ENCODE measurements at regions of chr12 and their contacts with region 1.

Region 1: DNA sequence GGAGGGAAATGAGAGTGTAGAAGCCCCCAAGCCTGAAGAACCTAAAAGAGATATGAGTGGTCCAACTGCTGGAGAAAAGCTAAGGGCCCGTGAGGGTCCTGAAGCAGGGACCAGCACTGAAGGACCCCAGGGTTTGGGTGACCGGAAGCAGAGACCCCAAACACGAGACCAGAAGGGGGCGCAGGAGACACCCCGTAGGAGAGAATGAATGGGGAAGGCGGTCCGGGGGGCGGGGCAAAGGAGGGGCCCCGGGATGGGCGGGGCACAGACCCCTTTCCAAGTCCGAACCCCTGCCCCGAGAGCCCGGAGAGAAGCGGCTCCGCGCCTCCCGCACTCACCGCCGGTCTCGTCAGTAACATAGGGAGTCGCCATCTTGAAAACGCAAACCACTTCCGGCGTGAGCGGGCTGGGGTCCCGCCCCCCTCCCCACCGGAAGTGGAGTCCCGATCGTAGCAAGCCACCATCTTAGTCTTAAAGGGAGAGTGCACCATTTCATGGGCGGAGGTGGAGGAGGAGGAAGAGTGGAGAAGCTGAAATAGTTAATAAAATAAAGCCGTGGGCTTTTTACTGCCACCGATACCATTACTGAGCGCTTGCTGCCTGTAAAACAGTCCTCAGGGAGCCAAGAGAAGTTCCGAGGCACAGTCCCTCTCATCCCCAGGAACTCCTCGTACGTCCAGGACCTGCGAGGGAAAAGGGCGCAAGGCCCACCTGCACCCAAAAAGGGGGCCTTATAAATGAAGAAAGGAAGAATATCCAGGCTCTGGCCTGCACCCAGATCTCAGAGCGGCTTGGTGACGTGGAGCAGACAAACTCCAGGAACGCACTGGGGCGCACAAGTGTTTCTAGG is 731 bp downstream of the PYM1 start:
- DNase-seq: peak; percentile 88
- H3K4me3 Mint-ChIP-seq: peak overlapping the region; percentile 99
- H3K27ac Mint-ChIP-seq: peak overlapping the region; percentile 91
- H3K4me1 Mint-ChIP-seq: peaks cover 53% of the 10 kb centered on the region
- H3K27me3 Mint-ChIP-seq: no peaks in the 10 kb centered on the region

Region 2: DNA sequence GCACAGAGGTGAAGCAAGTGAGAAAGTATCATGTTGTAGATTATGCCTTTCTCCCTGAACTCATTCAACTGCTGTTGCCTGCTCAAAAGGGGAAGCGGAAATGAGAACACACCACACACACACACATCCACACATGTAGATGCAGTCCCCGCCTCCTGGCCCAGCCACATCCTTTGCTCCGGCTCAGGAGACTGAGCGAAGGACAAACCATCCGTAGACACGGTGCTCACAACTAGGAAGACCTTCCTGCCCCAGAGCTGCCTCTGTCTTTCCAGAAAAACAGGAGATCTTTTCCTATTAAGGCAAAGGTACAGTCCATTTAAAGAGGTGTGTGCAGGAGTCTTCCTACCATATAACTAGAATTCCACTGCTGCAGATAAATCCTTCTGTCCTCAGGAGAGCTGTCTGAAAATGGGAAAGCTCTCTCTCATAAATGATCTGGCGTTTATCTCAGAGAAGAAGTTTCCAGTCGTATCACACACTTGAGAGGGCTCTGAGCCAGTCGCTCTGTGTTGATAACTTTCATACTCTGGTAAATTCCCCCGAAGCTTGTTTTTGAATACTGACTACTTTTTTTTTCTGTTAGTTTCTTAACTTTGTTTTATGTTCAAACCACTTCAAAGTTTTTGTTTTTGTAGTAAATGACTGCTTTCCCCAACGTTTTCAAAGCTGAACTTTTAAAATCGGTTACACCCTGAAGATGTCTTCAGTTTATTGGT is 942.1 kb before region 1 on chr12 and contains the start of gene TESPA1:
- intact Hi-C with region 1: loop called (anchors 5 kb)
- DNase-seq: peak; percentile 82
- H3K4me3 Mint-ChIP-seq: peak within 1 kb of the TSS; percentile 92
- H3K27ac Mint-ChIP-seq: peak within 1 kb of the TSS; percentile 89
- H3K4me1 Mint-ChIP-seq: peaks cover 59% of the 10 kb centered on the region
- H3K27me3 Mint-ChIP-seq: no peaks in the 10 kb centered on the region
- total RNA-seq, gene TESPA1: 179 and 186 TPM in 2 replicates

Region 3: GRCh38 chr12:55817346-55818139 is 109.4 kb before region 1 on chr12 and contains the starts of genes ORMDL2 and SARNP:
- intact Hi-C with region 1: loop called (anchors 1 kb)
- DNase-seq: peak; percentile 98
- H3K4me3 Mint-ChIP-seq: no peak within 1 kb of the TSS
- H3K27ac Mint-ChIP-seq: peak within 1 kb of the TSS; percentile 43
- H3K4me1 Mint-ChIP-seq: peaks cover 28% of the 10 kb centered on the region
- H3K27me3 Mint-ChIP-seq: no peaks in the 10 kb centered on the region
- total RNA-seq, gene ORMDL2: 58.6 and 59.2 TPM in 2 replicates
- total RNA-seq, gene SARNP: 78.3 and 82.2 TPM in 2 replicates

Region 4: GRCh38 chr12:55940065-55940732 is 13.2 kb after region 1 on chr12:
- intact Hi-C with region 1: loop called (anchors 1 kb)
- DNase-seq: peak; percentile 76
- H3K4me3 Mint-ChIP-seq: no peak overlapping the region
- H3K27ac Mint-ChIP-seq: peak overlapping the region; percentile 51
- H3K4me1 Mint-ChIP-seq: peaks cover 50% of the 10 kb centered on the region
- H3K27me3 Mint-ChIP-seq: no peaks in the 10 kb centered on the region

Region 5: GRCh38 chr12:55996715-55997534 is 70.0 kb after region 1 on chr12 and contains the start of gene SUOX:
- intact Hi-C with region 1: loop called (anchors 2 kb)
- DNase-seq: peak; percentile 54
- H3K4me3 Mint-ChIP-seq: peak within 1 kb of the TSS; percentile 84
- H3K27ac Mint-ChIP-seq: peak within 1 kb of the TSS; percentile 46
- H3K4me1 Mint-ChIP-seq: peaks cover 24% of the 10 kb centered on the region
- H3K27me3 Mint-ChIP-seq: no peaks in the 10 kb centered on the region
- total RNA-seq, gene SUOX: 19.9 and 21.2 TPM in 2 replicates

Region 6: DNA sequence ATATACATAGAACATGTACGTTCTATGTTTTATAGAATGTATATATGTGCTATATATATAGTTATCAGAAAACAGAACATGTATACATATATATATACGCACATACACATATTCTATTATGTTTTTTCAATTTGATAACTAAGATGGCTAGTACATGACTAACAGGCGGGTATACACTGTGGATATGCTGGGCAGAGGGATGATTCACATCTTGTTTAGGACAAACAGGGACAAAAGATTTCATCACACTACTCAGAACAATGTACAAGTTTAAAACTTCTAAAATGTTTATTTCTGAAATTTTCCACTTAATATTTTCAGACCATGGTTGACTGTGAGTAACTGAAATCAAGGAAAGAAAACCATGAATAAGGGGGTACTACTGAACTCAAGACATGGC is 504.9 kb after region 1 on chr12:
- intact Hi-C with region 1: no loop called
- DNase-seq: no peak
- H3K4me3 Mint-ChIP-seq: no peak overlapping the region
- H3K27ac Mint-ChIP-seq: no peak overlapping the region
- H3K4me1 Mint-ChIP-seq: no peaks in the 10 kb centered on the region
- H3K27me3 Mint-ChIP-seq: no peaks in the 10 kb centered on the region

Region 7: GRCh38 chr12:56636675-56637540 is 709.9 kb after region 1 on chr12:
- intact Hi-C with region 1: loop called (anchors 10 kb)
- DNase-seq: peak; percentile 87
- H3K4me3 Mint-ChIP-seq: peak overlapping the region; percentile 97
- H3K27ac Mint-ChIP-seq: peak overlapping the region; percentile 93
- H3K4me1 Mint-ChIP-seq: peaks cover 47% of the 10 kb centered on the region
- H3K27me3 Mint-ChIP-seq: no peaks in the 10 kb centered on the region